ENCODE measurements at regions of chr12 and their contacts with region 1.

Region 1: GRCh38 chr12:89709157-89709994 is 738 bp upstream of the ATP2B1 start:
- DNase-seq: peak; percentile 98 to 99 (median 99)
- H3K4me3 ChIP-seq: peak overlapping the region; percentile 96
- H3K27ac ChIP-seq: peak overlapping the region; percentile 95 to 98
- H3K4me1 ChIP-seq: no peaks in the 10 kb centered on the region
- H3K27me3 ChIP-seq: no peaks in the 10 kb centered on the region
- CTCF ChIP-seq: peak in 1 of 3 donors; percentile 11
- EP300 ChIP-seq: peak; percentile 95
- POLR2A ChIP-seq: peak; percentile 95

Region 2: GRCh38 chr12:89663577-89664357 is 45.6 kb before region 1 on chr12:
- intact Hi-C with region 1: no loop called
- DNase-seq: no peak
- H3K4me3 ChIP-seq: no peak overlapping the region
- H3K27ac ChIP-seq: no peak overlapping the region
- H3K4me1 ChIP-seq: no peaks in the 10 kb centered on the region
- H3K27me3 ChIP-seq: no peaks in the 10 kb centered on the region
- CTCF ChIP-seq: no peak
- EP300 ChIP-seq: no peak
- POLR2A ChIP-seq: no peak

Region 3: GRCh38 chr12:89949457-89950195 is 240.2 kb after region 1 on chr12:
- intact Hi-C with region 1: loop called in 1 of 4 experiments (anchors 10 kb)
- DNase-seq: peak in 1 of 5 donors; percentile 19
- H3K4me3 ChIP-seq: no peak overlapping the region
- H3K27ac ChIP-seq: no peak overlapping the region
- H3K4me1 ChIP-seq: peaks cover 3% of the 10 kb centered on the region
- H3K27me3 ChIP-seq: no peaks in the 10 kb centered on the region
- CTCF ChIP-seq: no peak
- EP300 ChIP-seq: no peak
- POLR2A ChIP-seq: no peak

Measured in ovary (tissue), 10 donors.